Activated CD8-positive, alpha-beta memory T cell treated with anti-CD3 and anti-CD28 coated beads, Interleukin-2, amount 10 ng/mL, durations not matched to agents 7 days and 5 days (primary cell): ENCODE measurements at regions of chr1 and their contacts with region 1.

Region 1: DNA sequence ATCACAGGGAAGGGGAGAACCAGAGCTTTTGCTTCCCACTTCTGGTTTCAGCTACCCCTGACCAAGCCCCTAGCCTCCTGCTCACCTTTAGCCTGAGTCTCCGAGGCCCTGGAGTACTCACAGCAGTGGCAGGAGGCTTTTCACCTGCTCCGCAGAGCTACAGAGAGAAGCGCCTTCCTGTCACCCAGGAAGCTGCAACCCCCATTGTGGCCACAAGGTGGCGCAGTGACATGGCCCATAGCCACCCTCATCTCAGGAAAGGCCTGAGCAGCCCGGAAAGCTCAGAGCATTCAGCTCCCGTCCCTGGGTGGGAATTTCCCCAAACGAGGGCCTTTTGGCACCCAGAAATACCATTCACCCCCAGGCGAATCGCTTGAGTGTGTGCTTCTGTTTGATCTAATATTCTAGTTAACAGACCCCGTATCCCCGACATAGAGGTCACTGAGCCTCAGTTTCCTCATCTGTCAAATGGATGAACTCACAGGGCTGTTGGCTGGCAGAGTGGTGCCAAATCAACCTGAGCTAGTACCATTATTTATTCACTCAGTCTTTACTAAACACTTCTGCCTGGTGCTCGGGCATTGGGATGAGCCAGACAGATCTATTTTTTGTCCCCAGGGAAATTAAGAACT is 25.3 kb downstream of the A3GALT2 start:
- DNase-seq: peak; percentile 92
- ATAC-seq: peak; percentile 92
- H3K4me3 Mint-ChIP-seq: no peak overlapping the region
- H3K27ac Mint-ChIP-seq: no peak overlapping the region
- H3K4me1 Mint-ChIP-seq: peaks cover 20% of the 10 kb centered on the region
- H3K27me3 Mint-ChIP-seq: no peaks in the 10 kb centered on the region

Region 2: GRCh38 chr1:33118274-33118673 is 177.3 kb before region 1 on chr1:
- CTCF ChIA-PET with region 1: interaction called, 12 read pairs
- DNase-seq: peak; percentile 39
- ATAC-seq: no peak
- H3K4me3 Mint-ChIP-seq: no peak overlapping the region
- H3K27ac Mint-ChIP-seq: no peak overlapping the region
- H3K4me1 Mint-ChIP-seq: no peaks in the 10 kb centered on the region
- H3K27me3 Mint-ChIP-seq: no peaks in the 10 kb centered on the region

Region 3: DNA sequence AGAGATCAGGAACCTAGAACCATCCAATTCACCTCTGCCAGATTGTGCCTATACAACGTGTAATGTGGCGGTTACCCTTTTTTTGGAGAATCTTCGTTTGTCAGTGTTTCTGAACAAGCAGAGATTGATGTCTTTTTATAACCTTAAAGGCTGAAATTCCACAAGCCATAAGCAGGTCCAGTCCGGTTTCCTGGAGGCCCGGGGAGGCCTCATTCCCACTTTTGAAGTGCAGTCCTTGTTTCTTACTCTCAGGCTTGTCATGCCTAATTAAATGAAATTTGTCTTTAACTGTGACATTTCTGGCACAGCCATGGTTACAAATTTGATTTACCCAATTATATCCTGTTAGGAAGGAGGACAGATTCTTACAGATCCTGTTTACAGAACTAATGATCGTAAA is 11.5 kb before region 1 on chr1:
- CTCF ChIA-PET with region 1: interaction called, 12 read pairs
- DNase-seq: no peak
- ATAC-seq: no peak
- H3K4me3 Mint-ChIP-seq: no peak overlapping the region
- H3K27ac Mint-ChIP-seq: no peak overlapping the region
- H3K4me1 Mint-ChIP-seq: no peaks in the 10 kb centered on the region
- H3K27me3 Mint-ChIP-seq: no peaks in the 10 kb centered on the region

Region 4: GRCh38 chr1:33319949-33320605 is 24.5 kb after region 1 on chr1:
- CTCF ChIA-PET with region 1: interaction called, 12 read pairs
- DNase-seq: no peak
- ATAC-seq: no peak
- H3K4me3 Mint-ChIP-seq: no peak overlapping the region
- H3K27ac Mint-ChIP-seq: no peak overlapping the region
- H3K4me1 Mint-ChIP-seq: no peaks in the 10 kb centered on the region
- H3K27me3 Mint-ChIP-seq: peaks cover 31% of the 10 kb centered on the region

Region 5: DNA sequence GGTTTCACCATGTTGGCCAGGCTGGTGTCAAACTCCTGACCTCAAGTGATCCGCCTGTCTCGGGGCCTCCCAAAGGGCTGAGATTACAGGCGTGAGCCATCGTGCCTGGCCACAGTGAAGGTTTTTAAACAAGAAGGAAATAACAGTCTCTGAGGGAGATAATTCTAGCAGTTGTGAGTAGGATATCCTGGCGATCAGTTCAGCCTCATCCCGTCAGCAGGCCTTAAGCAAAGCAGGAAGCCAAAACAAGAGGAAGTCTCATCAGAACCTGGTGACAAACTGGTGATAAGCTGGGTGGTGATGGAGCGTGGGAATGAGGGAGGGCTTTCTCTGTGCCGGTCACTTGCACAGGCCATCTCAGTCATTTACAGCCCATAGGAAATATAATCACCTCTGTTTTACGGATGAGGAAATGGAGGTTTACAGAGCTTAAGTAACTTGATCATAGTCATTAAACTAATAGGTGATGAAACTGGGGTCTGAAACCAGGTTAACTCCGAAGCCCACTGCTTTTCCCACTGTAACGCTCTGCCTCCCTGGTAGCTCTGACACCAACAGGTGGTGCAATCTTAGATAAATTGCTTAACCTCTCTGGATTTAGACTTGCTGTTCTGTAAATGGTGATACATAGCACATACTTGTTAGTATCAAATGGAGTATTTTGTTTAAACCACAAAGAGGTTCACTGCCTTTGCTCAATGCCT is 66.1 kb after region 1 on chr1:
- CTCF ChIA-PET with region 1: interaction called, 107 read pairs
- DNase-seq: no peak
- ATAC-seq: no peak
- H3K4me3 Mint-ChIP-seq: no peak overlapping the region
- H3K27ac Mint-ChIP-seq: peak overlapping the region; percentile 0
- H3K4me1 Mint-ChIP-seq: peaks cover 4% of the 10 kb centered on the region
- H3K27me3 Mint-ChIP-seq: no peaks in the 10 kb centered on the region

Region 6: GRCh38 chr1:33455539-33456501 is 160.3 kb after region 1 on chr1:
- CTCF ChIA-PET with region 1: interaction called, 22 read pairs
- DNase-seq: peak; percentile 75
- ATAC-seq: peak; percentile 91
- H3K4me3 Mint-ChIP-seq: no peak overlapping the region
- H3K27ac Mint-ChIP-seq: peak overlapping the region; percentile 1
- H3K4me1 Mint-ChIP-seq: peaks cover 7% of the 10 kb centered on the region
- H3K27me3 Mint-ChIP-seq: peaks cover 39% of the 10 kb centered on the region